ENCODE measurements at regions of chr11 and their contacts with region 1.

Region 1: DNA sequence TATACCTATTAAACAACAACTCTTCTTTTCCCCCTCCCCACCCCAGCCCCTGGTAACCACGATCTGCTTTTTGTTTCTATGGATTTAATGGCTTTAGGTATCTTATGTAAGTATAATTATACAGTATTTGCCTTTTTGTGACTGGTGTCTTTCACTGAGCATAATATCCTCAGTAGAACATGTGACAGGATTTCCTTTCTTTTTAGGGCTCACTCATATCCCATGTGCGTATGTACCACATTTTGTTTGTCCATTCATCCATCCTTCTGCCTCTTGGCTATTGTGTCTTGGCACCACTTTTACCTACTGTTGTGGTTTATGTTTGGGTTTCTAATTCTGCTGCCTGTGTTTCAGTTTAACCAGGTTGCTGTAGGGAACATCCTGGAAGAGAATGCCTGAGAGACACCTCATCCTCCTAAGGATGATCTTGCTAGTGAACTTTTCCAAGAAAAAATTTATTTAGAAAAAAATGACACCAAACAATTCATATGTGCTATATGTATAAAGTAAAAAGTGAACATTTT is 77.6 kb upstream of the SESN3 start:
- DNase-seq: no peak
- H3K4me3 ChIP-seq: no peak overlapping the region
- H3K27ac ChIP-seq: no peak overlapping the region
- H3K4me1 ChIP-seq: no peaks in the 10 kb centered on the region
- H3K27me3 ChIP-seq: no peaks in the 10 kb centered on the region
- CTCF ChIP-seq: no peak
- POLR2A ChIP-seq: no peak

Region 2: GRCh38 chr11:95212609-95213008 is 96.0 kb before region 1 on chr11:
- CTCF ChIA-PET with region 1: no interaction called
- POLR2A ChIA-PET with region 1: no interaction called
- dilution Hi-C with region 1: no loop called
- intact Hi-C with region 1: no loop called
- DNase-seq: no peak
- H3K4me3 ChIP-seq: no peak overlapping the region
- H3K27ac ChIP-seq: no peak overlapping the region
- H3K4me1 ChIP-seq: no peaks in the 10 kb centered on the region
- H3K27me3 ChIP-seq: no peaks in the 10 kb centered on the region
- CTCF ChIP-seq: no peak
- POLR2A ChIP-seq: no peak

Region 3: GRCh38 chr11:95269036-95269819 is 39.3 kb before region 1 on chr11:
- CTCF ChIA-PET with region 1: no interaction called
- POLR2A ChIA-PET with region 1: no interaction called
- dilution Hi-C with region 1: no loop called
- intact Hi-C with region 1: loop called (anchors 1 kb)
- DNase-seq: no peak
- H3K4me3 ChIP-seq: no peak overlapping the region
- H3K27ac ChIP-seq: no peak overlapping the region
- H3K4me1 ChIP-seq: no peaks in the 10 kb centered on the region
- H3K27me3 ChIP-seq: no peaks in the 10 kb centered on the region
- CTCF ChIP-seq: no peak
- POLR2A ChIP-seq: no peak

Measured in endothelial cell of umbilical vein (primary cell).